H1 (cell line): ENCODE measurements at regions of chr7 and their contacts with region 1.

Region 1: GRCh38 chr7:87910138-87910537 is 23.9 kb upstream of the ADAM22 start:
- DNase-seq: no peak
- H3K4me3 ChIP-seq: no peak overlapping the region
- H3K27ac ChIP-seq: no peak overlapping the region
- H3K4me1 ChIP-seq: no peaks in the 10 kb centered on the region
- H3K27me3 ChIP-seq: no peaks in the 10 kb centered on the region
- CTCF ChIP-seq: no peak
- EP300 ChIP-seq: no peak
- POLR2A ChIP-seq: no peak
- RAD21 ChIP-seq: no peak

Region 2: DNA sequence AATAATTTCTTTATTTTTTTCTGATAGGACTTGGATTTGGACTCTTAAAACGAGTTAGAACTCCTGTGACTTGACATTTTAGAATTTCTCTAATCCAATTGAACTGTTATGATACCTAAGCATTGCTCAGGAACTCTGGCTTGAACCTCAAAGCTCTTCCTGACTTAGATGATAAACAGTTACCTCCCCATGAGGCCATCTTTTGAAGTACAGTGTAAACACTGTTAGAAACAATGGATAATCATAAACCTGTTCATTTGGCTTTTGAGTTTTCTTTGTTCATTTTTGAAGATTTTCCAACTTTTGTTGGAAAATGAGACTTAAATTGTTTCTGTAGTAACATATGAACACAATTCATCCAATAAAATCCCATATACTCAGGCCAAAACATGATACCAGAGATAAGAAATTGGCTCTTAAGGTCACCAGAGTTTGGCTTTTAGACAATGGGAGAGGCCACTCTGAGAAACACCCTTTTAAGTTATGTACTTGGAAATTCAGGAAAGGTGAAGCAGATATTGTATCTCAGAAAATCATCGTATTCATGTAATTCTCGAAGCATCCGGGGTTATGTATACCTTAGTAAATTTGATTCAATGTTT is 222.4 kb before region 1 on chr7:
- CTCF ChIA-PET with region 1: no interaction called
- POLR2A ChIA-PET with region 1: no interaction called
- DNase-seq: no peak
- H3K4me3 ChIP-seq: no peak overlapping the region
- H3K27ac ChIP-seq: no peak overlapping the region
- H3K4me1 ChIP-seq: no peaks in the 10 kb centered on the region; a peak in 1 of 7 replicates
- H3K27me3 ChIP-seq: no peaks in the 10 kb centered on the region
- CTCF ChIP-seq: no peak
- EP300 ChIP-seq: no peak
- POLR2A ChIP-seq: no peak
- RAD21 ChIP-seq: no peak

Region 3: DNA sequence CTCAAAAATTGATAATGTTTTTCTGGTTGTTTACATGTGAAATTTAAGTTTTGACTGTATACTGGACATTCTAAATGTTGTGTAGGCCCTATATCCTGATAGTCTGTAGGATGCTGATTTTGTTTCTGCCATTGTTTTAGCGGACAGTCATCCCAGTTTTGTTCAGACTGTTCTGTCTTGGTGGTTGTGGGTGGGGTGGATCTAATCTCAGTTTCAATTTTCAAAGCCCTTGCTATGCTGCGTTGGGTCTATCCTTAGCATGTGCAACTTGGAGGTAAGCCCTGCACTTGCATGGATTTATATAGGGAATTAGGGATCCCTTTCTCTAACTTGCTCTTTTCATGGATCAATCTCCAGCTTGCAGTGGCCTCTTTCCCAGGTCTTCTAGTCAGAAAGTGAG is 14.8 kb before region 1 on chr7:
- CTCF ChIA-PET with region 1: no interaction called
- POLR2A ChIA-PET with region 1: no interaction called
- DNase-seq: no peak
- H3K4me3 ChIP-seq: no peak overlapping the region
- H3K27ac ChIP-seq: no peak overlapping the region
- H3K4me1 ChIP-seq: no peaks in the 10 kb centered on the region
- H3K27me3 ChIP-seq: no peaks in the 10 kb centered on the region
- CTCF ChIP-seq: no peak
- EP300 ChIP-seq: no peak
- POLR2A ChIP-seq: no peak
- RAD21 ChIP-seq: no peak

Region 4: GRCh38 chr7:87920578-87920977 is 10.4 kb after region 1 on chr7:
- CTCF ChIA-PET with region 1: interaction called, 21 read pairs
- POLR2A ChIA-PET with region 1: no interaction called
- DNase-seq: no peak
- H3K4me3 ChIP-seq: no peak overlapping the region
- H3K27ac ChIP-seq: no peak overlapping the region
- H3K4me1 ChIP-seq: peaks cover 0 to 3% (median 0%) of the 10 kb centered on the region in 4 experiments; a peak in 1 of 7 replicates
- H3K27me3 ChIP-seq: no peaks in the 10 kb centered on the region
- CTCF ChIP-seq: peak in 2 of 3 experiments; percentile 9 to 16; a peak in 2 of 4 replicates
- EP300 ChIP-seq: no peak
- POLR2A ChIP-seq: no peak
- RAD21 ChIP-seq: peak in 1 of 2 experiments; percentile 12; a peak in 1 of 4 replicates

Region 5: DNA sequence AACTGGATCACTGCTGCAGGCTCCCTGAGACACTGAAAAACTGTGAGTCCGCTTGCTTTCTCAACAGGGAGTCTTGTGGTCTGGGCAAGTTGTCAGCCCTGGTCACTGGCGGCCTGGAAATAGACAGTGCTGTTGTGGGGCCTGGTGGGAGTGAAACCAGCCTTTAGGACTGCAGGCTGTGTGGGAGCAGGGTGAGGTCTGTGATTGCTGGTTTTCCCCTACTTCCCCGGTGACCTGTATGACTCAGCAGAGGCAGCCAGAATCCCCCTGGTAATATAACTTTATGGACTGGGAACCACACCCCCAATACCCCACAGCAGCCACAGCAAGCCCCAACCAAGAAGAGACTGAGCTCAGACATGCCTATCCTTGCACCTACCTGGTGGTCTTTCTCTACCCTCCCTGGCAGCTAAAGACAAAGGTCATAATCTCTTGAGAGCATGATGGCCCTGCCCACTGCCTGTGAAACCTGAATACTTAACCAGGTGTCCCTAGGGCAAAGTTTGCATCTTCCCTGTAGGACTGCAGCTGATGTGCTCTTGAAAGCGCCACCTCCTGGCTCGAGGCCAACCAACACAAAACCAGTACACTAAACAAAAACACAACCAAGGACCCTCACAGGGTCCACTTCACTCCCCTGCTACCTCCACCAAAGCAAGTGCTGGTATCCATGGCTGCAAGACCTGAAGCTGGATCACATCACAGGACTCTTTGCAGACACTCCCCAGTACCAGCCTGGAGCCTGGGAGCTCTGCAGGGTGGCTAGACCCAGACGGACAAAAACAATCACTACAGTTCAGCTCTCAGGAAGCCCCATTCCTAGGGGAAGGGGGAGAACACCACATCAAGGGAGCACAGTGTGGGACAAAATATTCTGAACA is 16.7 kb after region 1 on chr7:
- CTCF ChIA-PET with region 1: interaction called, 21 read pairs
- POLR2A ChIA-PET with region 1: interaction called, 4 read pairs
- DNase-seq: peak; percentile 44 to 66
- H3K4me3 ChIP-seq: no peak overlapping the region
- H3K27ac ChIP-seq: peak overlapping the region; percentile 49
- H3K4me1 ChIP-seq: peaks cover 4 to 10% (median 7%) of the 10 kb centered on the region in 4 experiments
- H3K27me3 ChIP-seq: no peaks in the 10 kb centered on the region
- CTCF ChIP-seq: peak; percentile 57 to 79 (median 61)
- EP300 ChIP-seq: no peak
- POLR2A ChIP-seq: peak in 1 of 2 experiments; percentile 74; a peak in 2 of 3 replicates
- RAD21 ChIP-seq: peak; percentile 52 to 56

Region 6: GRCh38 chr7:88243345-88243909 is 333.3 kb after region 1 on chr7:
- CTCF ChIA-PET with region 1: no interaction called
- POLR2A ChIA-PET with region 1: no interaction called
- DNase-seq: peak in 1 of 2 experiments; percentile 45
- H3K4me3 ChIP-seq: no peak overlapping the region
- H3K27ac ChIP-seq: no peak overlapping the region
- H3K4me1 ChIP-seq: peaks cover 0 to 3% (median 0%) of the 10 kb centered on the region in 4 experiments; a peak in 1 of 7 replicates
- H3K27me3 ChIP-seq: no peaks in the 10 kb centered on the region
- CTCF ChIP-seq: peak in 2 of 3 experiments; percentile 47 to 78; a peak in 2 of 4 replicates
- EP300 ChIP-seq: no peak
- POLR2A ChIP-seq: no peak
- RAD21 ChIP-seq: peak; percentile 89 to 94